ENCODE measurements at regions of chr11 and their contacts with region 1.

Region 1: GRCh38 chr11:25441421-25441820 is 890.5 kb upstream of the ANO3 start:
- DNase-seq: no peak
- ATAC-seq: no peak
- H3K4me3 Mint-ChIP-seq: no peak overlapping the region
- H3K27ac Mint-ChIP-seq: no peak overlapping the region
- H3K4me1 Mint-ChIP-seq: no peaks in the 10 kb centered on the region
- H3K27me3 Mint-ChIP-seq: no peaks in the 10 kb centered on the region
- CTCF ChIP-seq: no peak

Region 2: GRCh38 chr11:24043842-24044241 is 1397.6 kb before region 1 on chr11:
- CTCF ChIA-PET with region 1: no interaction called
- POLR2A ChIA-PET with region 1: interaction called, 11 read pairs
- DNase-seq: peak; percentile 11
- ATAC-seq: peak; percentile 52
- H3K4me3 Mint-ChIP-seq: no peak overlapping the region
- H3K27ac Mint-ChIP-seq: no peak overlapping the region
- H3K4me1 Mint-ChIP-seq: no peaks in the 10 kb centered on the region
- H3K27me3 Mint-ChIP-seq: no peaks in the 10 kb centered on the region
- CTCF ChIP-seq: no peak

Region 3: GRCh38 chr11:25527841-25528240 is 86.4 kb after region 1 on chr11:
- CTCF ChIA-PET with region 1: no interaction called
- POLR2A ChIA-PET with region 1: no interaction called
- DNase-seq: no peak
- ATAC-seq: no peak
- H3K4me3 Mint-ChIP-seq: no peak overlapping the region
- H3K27ac Mint-ChIP-seq: no peak overlapping the region
- H3K4me1 Mint-ChIP-seq: peaks cover 10% of the 10 kb centered on the region
- H3K27me3 Mint-ChIP-seq: no peaks in the 10 kb centered on the region
- CTCF ChIP-seq: no peak